ENCODE measurements at regions of chr4 and their contacts with region 1.

Region 1: DNA sequence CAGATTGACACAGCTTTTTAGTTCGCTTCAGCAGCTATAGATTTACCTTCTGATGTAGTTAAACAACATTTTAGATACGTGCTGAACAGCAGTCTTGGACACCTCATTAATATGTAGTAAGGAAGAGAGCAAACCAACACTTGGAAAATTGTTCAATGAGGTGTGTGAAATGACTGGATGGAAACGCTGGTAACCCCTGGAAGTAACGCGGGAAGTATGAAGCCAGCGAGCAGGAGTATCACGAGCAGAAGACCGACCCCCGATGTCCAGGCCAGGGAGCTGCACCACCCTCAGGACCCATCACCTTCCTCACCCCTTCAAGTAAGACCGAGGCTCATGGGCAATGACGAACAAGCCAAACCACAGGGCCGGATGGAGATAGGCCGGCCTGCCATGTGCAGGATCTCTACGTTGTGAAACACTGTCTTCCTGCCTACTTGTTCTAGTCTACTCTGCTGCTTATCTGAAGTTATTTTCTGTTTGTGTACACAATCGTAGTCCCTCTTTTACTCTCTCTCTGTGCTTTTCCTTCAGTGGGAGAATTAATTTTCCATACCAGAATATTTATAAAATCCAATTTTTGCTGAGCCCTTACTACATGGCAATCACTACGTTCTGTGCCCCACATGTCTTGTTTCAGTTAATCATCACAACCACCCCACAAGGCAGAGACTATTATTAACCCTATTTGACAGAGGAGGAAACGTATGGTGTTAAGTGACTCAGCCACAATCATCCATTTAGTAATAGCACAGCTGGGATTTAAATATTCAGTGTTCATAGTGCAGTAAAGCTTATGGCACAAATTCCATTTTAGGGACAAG is 221.7 kb downstream of the APBB2 start:
- DNase-seq: peak in 1 of 2 experiments; percentile 34
- ATAC-seq: no peak
- H3K4me3 ChIP-seq: no peak overlapping the region
- H3K27ac ChIP-seq: peak overlapping the region; percentile 78 to 89
- H3K4me1 ChIP-seq: peaks cover 68% of the 10 kb centered on the region
- CTCF ChIP-seq: no peak
- EP300 ChIP-seq: no peak
- POLR2A ChIP-seq: no peak
- RAD21 ChIP-seq: no peak

Region 2: DNA sequence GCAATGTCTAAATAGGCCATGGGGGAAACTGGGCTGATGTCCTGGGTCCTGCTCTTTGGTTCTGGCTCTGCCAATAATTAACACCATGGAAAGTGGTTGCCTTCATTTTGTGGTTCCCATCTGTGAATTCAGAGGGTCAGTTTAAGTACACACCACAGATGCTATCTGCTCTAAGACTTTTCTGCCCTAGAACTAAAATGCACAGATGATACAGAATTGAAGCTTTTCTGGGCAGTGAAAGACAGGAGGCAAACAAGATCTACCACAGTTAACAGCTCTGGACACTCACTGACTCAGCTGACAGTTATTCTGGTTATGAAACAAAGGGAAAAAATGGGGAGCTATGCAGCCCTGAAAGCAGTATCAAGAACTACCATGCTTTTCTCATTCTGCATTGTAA is 184.3 kb after region 1 on chr4:
- CTCF ChIA-PET with region 1: no interaction called
- POLR2A ChIA-PET with region 1: interaction called, 15 read pairs
- DNase-seq: peak in 1 of 2 experiments; percentile 16
- ATAC-seq: peak; percentile 64 to 87; a peak in 4 of 6 replicates
- H3K4me3 ChIP-seq: no peak overlapping the region
- H3K27ac ChIP-seq: peak overlapping the region; percentile 47 to 77; a peak in 5 of 6 replicates
- H3K4me1 ChIP-seq: peaks cover 45% of the 10 kb centered on the region
- CTCF ChIP-seq: no peak
- EP300 ChIP-seq: no peak
- POLR2A ChIP-seq: no peak
- RAD21 ChIP-seq: peak in 1 of 2 experiments; percentile 31; a peak in 1 of 5 replicates